Common myeloid progenitor, CD34-positive (primary cell): ENCODE measurements at regions of chr17 and their contacts with region 1.

Region 1: GRCh38 chr17:77494664-77495435 is 354.1 kb downstream of the SEC14L1 start:
- DNase-seq: peak; percentile 56 to 73 (median 60)
- H3K4me3 ChIP-seq: no peak overlapping the region
- H3K27ac ChIP-seq: no peak overlapping the region
- H3K4me1 ChIP-seq: peaks cover 0 to 10% (median under 1%) of the 10 kb centered on the region in 4 experiments
- H3K27me3 ChIP-seq: no peaks in the 10 kb centered on the region

Region 2: DNA sequence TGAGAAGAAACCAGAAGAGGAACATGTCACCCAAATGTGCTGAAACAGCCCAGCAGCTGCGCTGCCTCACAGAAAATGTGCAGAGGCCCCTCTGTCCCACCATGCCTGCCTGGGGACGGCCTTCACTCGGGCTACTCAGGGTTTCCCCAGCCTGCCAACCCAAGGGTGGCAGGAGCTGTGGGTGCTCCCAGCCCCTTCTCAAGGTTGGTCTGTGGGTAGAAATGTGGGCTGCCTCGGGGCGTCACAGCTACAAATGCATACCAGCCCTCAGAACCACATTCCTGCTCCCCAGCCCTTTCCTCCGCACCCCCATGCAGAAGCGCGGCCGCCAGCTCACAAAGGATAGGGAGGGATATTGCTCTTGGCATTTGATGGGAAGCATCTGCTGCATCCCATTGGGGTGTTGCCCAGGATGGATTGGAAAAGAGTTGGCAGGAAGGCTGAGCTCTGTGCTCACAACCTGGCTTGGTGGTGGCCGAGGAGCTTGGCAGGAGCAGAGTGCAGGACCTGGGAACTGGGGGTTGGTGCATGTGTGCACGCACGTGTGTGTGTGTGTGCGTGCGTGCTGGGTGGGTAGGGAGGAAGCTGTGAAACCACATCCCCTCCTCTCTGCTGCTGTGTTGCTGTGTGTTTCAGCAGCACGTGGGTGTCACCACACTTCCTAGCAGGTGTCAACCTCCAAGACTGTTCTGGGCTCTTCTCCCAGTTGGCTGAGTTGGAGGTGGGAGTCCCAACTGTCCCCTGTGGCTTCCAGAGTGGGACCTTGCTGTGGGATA is 49.7 kb before region 1 on chr17:
- CTCF ChIA-PET with region 1: interaction called, 10 read pairs
- POLR2A ChIA-PET with region 1: no interaction called
- DNase-seq: peak; percentile 96 to 99 (median 98)
- H3K4me3 ChIP-seq: peak overlapping the region in 5 of 7 experiments; percentile 9 to 49 (median 48)
- H3K27ac ChIP-seq: peak overlapping the region; percentile 46 to 84
- H3K4me1 ChIP-seq: peaks cover 30 to 87% (median 78%) of the 10 kb centered on the region in 4 experiments
- H3K27me3 ChIP-seq: no peaks in the 10 kb centered on the region

Region 3: GRCh38 chr17:77507111-77507885 is 12.4 kb after region 1 on chr17:
- CTCF ChIA-PET with region 1: interaction called, 15 read pairs
- POLR2A ChIA-PET with region 1: no interaction called
- DNase-seq: no peak
- H3K4me3 ChIP-seq: no peak overlapping the region
- H3K27ac ChIP-seq: no peak overlapping the region
- H3K4me1 ChIP-seq: no peaks in the 10 kb centered on the region
- H3K27me3 ChIP-seq: peaks cover 0 to 3% (median 0%) of the 10 kb centered on the region in 5 experiments

Region 4: DNA sequence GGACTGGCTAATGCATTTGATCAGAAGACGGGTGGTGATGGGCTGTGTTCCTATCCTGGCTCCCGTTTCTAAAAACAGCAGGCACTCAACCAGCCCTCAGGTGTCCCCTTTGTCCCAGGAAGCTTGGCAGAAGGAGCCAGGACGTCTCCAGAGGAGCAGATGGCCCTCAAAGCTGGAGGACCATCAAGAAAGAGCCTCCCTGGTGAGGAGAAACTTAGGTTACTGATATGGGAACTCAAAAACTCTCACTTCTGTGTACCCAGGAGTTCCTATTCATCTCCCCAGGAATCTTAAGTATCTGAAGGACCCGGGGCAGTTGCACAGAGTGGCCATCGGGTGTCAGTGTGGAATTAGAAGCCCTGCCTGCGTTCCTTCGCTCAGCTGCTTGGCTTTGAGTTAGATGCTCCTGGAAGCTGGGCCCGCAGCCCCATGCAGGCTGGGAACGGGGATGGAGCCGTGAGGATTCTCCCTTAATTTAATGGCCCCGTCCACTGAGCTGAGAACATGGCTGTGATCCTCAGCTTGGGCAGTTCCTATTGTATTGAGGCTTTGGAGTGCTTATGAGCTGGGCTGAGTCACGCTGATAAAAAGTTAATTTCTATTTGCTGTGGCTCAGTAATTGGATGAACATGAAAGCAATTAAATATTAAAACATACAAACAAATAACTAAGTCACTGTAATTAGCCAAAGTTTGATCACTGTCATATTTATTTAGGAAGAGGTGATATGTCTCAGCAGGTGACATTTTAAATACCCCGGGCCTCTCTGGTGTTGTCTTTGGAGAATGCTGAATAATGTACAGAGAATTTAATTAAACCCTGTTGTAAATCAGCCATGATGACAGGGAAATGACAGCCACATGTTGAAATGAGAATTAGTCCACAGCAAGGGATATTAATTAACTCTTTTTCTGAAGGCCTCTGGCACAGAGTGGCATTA is 48.0 kb after region 1 on chr17:
- CTCF ChIA-PET with region 1: no interaction called
- POLR2A ChIA-PET with region 1: no interaction called
- DNase-seq: peak; percentile 74 to 83 (median 79)
- H3K4me3 ChIP-seq: no peak overlapping the region
- H3K27ac ChIP-seq: no peak overlapping the region
- H3K4me1 ChIP-seq: peaks cover 0 to 34% (median 17%) of the 10 kb centered on the region in 4 experiments
- H3K27me3 ChIP-seq: no peaks in the 10 kb centered on the region

Region 5: GRCh38 chr17:77555741-77556291 is 61.0 kb after region 1 on chr17:
- CTCF ChIA-PET with region 1: no interaction called
- POLR2A ChIA-PET with region 1: no interaction called
- DNase-seq: peak in 2 of 3 donors; percentile 56 to 76
- H3K4me3 ChIP-seq: no peak overlapping the region
- H3K27ac ChIP-seq: no peak overlapping the region
- H3K4me1 ChIP-seq: peaks cover 0 to 10% (median 2%) of the 10 kb centered on the region in 4 experiments
- H3K27me3 ChIP-seq: peaks cover 0 to 6% (median 0%) of the 10 kb centered on the region in 5 experiments

Region 6: DNA sequence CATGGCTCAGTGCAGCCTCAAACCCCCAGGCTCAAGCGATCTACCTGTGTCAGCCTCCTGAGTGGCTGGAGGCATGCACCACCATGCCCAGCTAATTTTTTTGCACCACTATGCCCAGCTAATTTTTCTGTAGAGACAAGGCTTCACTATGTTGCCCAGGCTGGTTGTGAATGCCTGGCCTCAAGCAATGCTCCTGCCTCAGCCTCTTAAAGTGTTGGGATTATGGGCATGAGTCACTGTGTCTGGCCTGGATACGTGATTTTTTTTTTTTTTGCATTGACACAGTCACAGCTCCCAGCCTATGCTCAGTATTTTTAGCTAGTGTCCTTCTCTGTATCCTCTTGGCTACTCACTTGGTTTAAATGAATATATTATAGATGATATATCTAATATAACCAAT is 86.6 kb after region 1 on chr17:
- CTCF ChIA-PET with region 1: no interaction called
- POLR2A ChIA-PET with region 1: no interaction called
- DNase-seq: no peak
- H3K4me3 ChIP-seq: no peak overlapping the region
- H3K27ac ChIP-seq: no peak overlapping the region
- H3K4me1 ChIP-seq: peaks cover 6 to 16% (median 9%) of the 10 kb centered on the region in 4 experiments
- H3K27me3 ChIP-seq: no peaks in the 10 kb centered on the region